A673 (cell line): ENCODE measurements at regions of chr9 and their contacts with region 1.

Region 1: GRCh38 chr9:73655363-73655762 is 503.7 kb downstream of the ANXA1 start:
- DNase-seq: no peak
- H3K4me3 ChIP-seq: no peak overlapping the region
- H3K27ac ChIP-seq: no peak overlapping the region
- H3K4me1 ChIP-seq: no peaks in the 10 kb centered on the region
- H3K27me3 ChIP-seq: peaks cover 24% of the 10 kb centered on the region
- CTCF ChIP-seq: no peak

Region 2: DNA sequence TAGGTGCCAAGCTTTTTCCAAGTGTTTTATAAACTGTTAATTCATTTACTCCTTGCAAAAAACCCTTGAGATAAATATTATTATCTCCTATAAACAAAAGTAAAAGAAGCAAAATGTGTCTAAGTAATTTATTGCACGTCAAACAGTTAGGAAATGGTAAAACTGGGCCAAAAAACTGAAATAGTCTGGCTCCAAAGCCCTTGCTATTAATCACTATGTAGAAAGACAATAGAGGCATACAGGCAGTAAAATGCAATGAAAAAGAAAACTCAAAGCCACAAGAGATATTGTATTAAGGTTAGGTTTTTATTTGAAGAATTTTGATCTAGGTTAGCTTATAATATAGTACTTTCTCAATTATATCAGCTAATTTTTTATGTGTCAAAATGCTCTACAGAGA is 46.0 kb before region 1 on chr9:
- CTCF ChIA-PET with region 1: no interaction called
- POLR2A ChIA-PET with region 1: no interaction called
- intact Hi-C with region 1: loop called (anchors 5 kb)
- DNase-seq: no peak
- H3K4me3 ChIP-seq: no peak overlapping the region
- H3K27ac ChIP-seq: no peak overlapping the region
- H3K4me1 ChIP-seq: no peaks in the 10 kb centered on the region
- H3K27me3 ChIP-seq: peaks cover 5% of the 10 kb centered on the region
- CTCF ChIP-seq: no peak

Region 3: GRCh38 chr9:74663459-74663858 is 1008.1 kb after region 1 on chr9:
- CTCF ChIA-PET with region 1: no interaction called
- POLR2A ChIA-PET with region 1: no interaction called
- intact Hi-C with region 1: no loop called
- DNase-seq: no peak
- H3K4me3 ChIP-seq: no peak overlapping the region
- H3K27ac ChIP-seq: no peak overlapping the region
- H3K4me1 ChIP-seq: no peaks in the 10 kb centered on the region
- H3K27me3 ChIP-seq: peaks cover 16% of the 10 kb centered on the region
- CTCF ChIP-seq: no peak